Mammary epithelial cell (primary cell): ENCODE measurements at regions of chr5 and their contacts with region 1.

Region 1: GRCh38 chr5:28344803-28345433 is 1306.5 kb upstream of the CDH9 start:
- DNase-seq: peak; percentile 38
- H3K4me3 ChIP-seq: no peak overlapping the region
- H3K27ac ChIP-seq: no peak overlapping the region
- H3K4me1 ChIP-seq: no peaks in the 10 kb centered on the region
- H3K27me3 ChIP-seq: no peaks in the 10 kb centered on the region
- CTCF ChIP-seq: peak; percentile 54 to 69

Region 2: GRCh38 chr5:27996665-27997064 is 348.3 kb before region 1 on chr5:
- CTCF ChIA-PET with region 1: no interaction called
- dilution Hi-C with region 1: no loop called
- in situ Hi-C with region 1: no loop called
- intact Hi-C with region 1: no loop called
- DNase-seq: no peak
- H3K4me3 ChIP-seq: no peak overlapping the region
- H3K27ac ChIP-seq: no peak overlapping the region
- H3K4me1 ChIP-seq: no peaks in the 10 kb centered on the region
- H3K27me3 ChIP-seq: no peaks in the 10 kb centered on the region
- CTCF ChIP-seq: no peak

Region 3: GRCh38 chr5:28430565-28431178 is 85.8 kb after region 1 on chr5:
- CTCF ChIA-PET with region 1: no interaction called
- dilution Hi-C with region 1: no loop called
- in situ Hi-C with region 1: no loop called
- intact Hi-C with region 1: no loop called
- DNase-seq: no peak
- H3K4me3 ChIP-seq: no peak overlapping the region
- H3K27ac ChIP-seq: no peak overlapping the region
- H3K4me1 ChIP-seq: no peaks in the 10 kb centered on the region
- H3K27me3 ChIP-seq: no peaks in the 10 kb centered on the region
- CTCF ChIP-seq: no peak

Region 4: GRCh38 chr5:28451483-28451882 is 106.6 kb after region 1 on chr5:
- CTCF ChIA-PET with region 1: no interaction called
- dilution Hi-C with region 1: no loop called
- in situ Hi-C with region 1: no loop called
- intact Hi-C with region 1: loop called (anchors 1 kb)
- DNase-seq: no peak
- H3K4me3 ChIP-seq: no peak overlapping the region
- H3K27ac ChIP-seq: no peak overlapping the region
- H3K4me1 ChIP-seq: no peaks in the 10 kb centered on the region
- H3K27me3 ChIP-seq: no peaks in the 10 kb centered on the region
- CTCF ChIP-seq: no peak

Region 5: DNA sequence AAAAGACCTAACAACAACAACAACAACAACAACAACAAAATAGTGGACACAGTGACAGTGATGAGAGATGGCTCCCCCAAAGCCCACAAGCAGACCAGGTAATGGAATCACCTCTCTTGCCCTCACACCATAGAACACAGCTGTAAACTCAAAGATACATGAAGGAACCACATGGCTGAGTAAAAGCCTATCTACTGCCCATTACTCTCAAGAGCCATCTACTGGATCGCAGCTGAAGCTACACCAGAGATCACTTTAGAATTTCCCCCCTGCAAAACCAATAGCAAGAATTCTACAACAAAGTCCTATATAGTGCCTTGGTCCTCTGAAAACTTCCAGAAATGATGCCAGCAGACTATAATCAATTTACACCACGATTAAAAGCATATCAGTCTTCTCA is 231.1 kb after region 1 on chr5:
- CTCF ChIA-PET with region 1: interaction called, 4 read pairs
- dilution Hi-C with region 1: no loop called
- in situ Hi-C with region 1: loop called in 1 of 2 experiments (anchors 10 kb)
- intact Hi-C with region 1: loop called (anchors 1 kb)
- DNase-seq: peak; percentile 17
- H3K4me3 ChIP-seq: no peak overlapping the region
- H3K27ac ChIP-seq: no peak overlapping the region
- H3K4me1 ChIP-seq: no peaks in the 10 kb centered on the region
- H3K27me3 ChIP-seq: no peaks in the 10 kb centered on the region
- CTCF ChIP-seq: peak; percentile 6 to 56

Region 6: GRCh38 chr5:28766565-28767158 is 421.7 kb after region 1 on chr5:
- CTCF ChIA-PET with region 1: interaction called, 3 read pairs
- dilution Hi-C with region 1: no loop called
- in situ Hi-C with region 1: no loop called
- intact Hi-C with region 1: loop called (anchors 1 kb)
- DNase-seq: peak; percentile 24
- H3K4me3 ChIP-seq: no peak overlapping the region
- H3K27ac ChIP-seq: no peak overlapping the region
- H3K4me1 ChIP-seq: no peaks in the 10 kb centered on the region
- H3K27me3 ChIP-seq: no peaks in the 10 kb centered on the region
- CTCF ChIP-seq: peak in 1 of 2 donors; percentile 46